SK-N-SH (cell line): ENCODE measurements at regions of chr3 and their contacts with region 1.

Region 1: DNA sequence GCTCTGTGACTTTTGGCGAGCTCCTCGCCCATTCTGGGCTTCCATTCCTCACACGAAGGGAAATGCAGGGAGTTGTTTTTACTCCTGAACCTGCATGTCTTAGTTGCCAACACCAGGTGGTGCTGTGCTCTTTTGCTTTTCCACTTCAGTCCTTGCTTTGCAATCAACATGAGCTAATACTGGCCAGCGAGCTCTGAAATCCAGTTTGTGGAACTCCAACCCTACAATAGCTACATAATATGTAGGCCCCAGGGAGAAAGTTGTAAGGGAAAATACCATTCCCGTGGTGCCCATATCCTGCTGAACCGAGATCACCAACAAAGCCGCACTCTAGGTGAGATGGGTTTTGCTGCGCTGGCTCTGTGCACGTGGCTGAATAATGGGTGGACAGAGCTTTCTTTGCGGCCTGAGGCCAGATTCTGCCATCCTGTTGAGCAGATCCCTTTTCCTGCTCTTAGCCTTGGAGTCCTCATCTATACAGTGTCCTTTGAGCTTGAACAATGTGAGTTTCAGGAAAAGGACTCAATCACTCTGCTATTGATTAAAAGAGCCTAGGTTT is 25.0 kb downstream of the LSM3 start:
- DNase-seq: peak; percentile 70
- H3K4me3 ChIP-seq: peak overlapping the region in 1 of 2 experiments; percentile 21; a peak in 1 of 4 replicates
- H3K27ac ChIP-seq: no peak overlapping the region; a peak in 1 of 4 replicates
- H3K4me1 ChIP-seq: peaks cover 3 to 17% of the 10 kb centered on the region in 2 experiments; a peak in 2 of 4 replicates
- H3K27me3 ChIP-seq: no peaks in the 10 kb centered on the region
- CTCF ChIP-seq: peak; percentile 82
- EP300 ChIP-seq: no peak
- RAD21 ChIP-seq: peak; percentile 95

Region 2: DNA sequence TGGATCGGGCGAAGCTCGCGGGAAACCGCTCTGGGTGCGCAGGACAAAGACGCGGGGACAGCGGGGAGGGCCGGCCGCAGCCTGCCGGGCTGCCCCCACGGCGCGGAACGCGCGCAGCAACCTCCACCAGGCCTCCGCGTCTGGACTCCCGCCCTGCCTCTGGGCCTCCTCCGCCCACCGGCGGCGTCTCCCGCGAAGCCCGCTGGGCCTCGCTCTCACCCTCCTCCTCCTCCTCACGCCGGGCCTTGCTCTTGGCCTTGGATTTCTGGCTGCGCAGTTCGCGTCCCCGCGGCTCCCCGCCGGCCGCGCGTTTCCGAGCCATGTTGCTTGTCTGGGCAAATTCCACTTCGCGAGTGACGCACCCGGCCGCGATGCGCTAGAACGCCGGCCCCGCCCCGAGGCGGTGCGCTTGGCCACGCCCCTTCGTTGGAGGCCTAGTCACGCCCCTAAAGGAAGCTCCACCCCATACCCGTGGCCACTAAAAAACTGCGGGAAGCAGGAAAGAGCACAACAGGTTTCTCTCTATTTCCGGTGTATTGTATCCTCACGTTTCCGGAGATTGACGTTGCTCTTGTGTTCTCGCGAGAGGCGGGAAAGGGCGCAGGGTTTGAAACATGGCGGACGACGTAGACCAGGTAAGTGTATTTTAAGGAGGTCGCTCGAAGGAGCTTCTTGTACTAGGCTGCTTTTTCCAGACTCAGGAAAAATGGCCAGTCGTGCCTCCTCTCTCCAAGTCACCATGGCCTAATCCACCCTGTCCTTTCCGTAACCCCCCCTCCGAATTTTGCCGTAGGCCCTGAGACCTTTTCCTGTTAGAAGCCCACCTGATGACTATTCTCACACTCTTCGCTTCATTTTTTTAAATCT is 25.1 kb before region 1 on chr3 and contains the starts of genes LSM3 and XPC:
- CTCF ChIA-PET with region 1: interaction called, 28 read pairs
- POLR2A ChIA-PET with region 1: interaction called, 9 read pairs
- DNase-seq: peak; percentile 95
- H3K4me3 ChIP-seq: peak within 1 kb of the TSS; percentile 90 to 98
- H3K27ac ChIP-seq: peak within 1 kb of the TSS; percentile 90 to 94
- H3K4me1 ChIP-seq: peaks cover 17 to 34% of the 10 kb centered on the region in 2 experiments; a peak in 3 of 4 replicates
- H3K27me3 ChIP-seq: no peaks in the 10 kb centered on the region
- CTCF ChIP-seq: no peak
- EP300 ChIP-seq: no peak; a peak in 2 of 4 replicates
- RAD21 ChIP-seq: no peak
- polyA plus RNA-seq, gene LSM3: 5.1 and 6.4 TPM in 2 replicates
- polyA plus RNA-seq, gene XPC: 50.0 and 52.0 TPM in 2 replicates

Region 3: GRCh38 chr3:14216257-14217048 is 12.9 kb after region 1 on chr3:
- CTCF ChIA-PET with region 1: interaction called, 115 read pairs
- POLR2A ChIA-PET with region 1: interaction called, 18 read pairs
- DNase-seq: peak; percentile 85
- H3K4me3 ChIP-seq: peak overlapping the region; percentile 50 to 55
- H3K27ac ChIP-seq: peak overlapping the region; percentile 52 to 96
- H3K4me1 ChIP-seq: peaks cover 0 to 4% of the 10 kb centered on the region in 2 experiments; a peak in 1 of 4 replicates
- H3K27me3 ChIP-seq: no peaks in the 10 kb centered on the region
- CTCF ChIP-seq: peak; percentile 60
- EP300 ChIP-seq: no peak; a peak in 1 of 4 replicates
- RAD21 ChIP-seq: peak; percentile 69

Region 4: DNA sequence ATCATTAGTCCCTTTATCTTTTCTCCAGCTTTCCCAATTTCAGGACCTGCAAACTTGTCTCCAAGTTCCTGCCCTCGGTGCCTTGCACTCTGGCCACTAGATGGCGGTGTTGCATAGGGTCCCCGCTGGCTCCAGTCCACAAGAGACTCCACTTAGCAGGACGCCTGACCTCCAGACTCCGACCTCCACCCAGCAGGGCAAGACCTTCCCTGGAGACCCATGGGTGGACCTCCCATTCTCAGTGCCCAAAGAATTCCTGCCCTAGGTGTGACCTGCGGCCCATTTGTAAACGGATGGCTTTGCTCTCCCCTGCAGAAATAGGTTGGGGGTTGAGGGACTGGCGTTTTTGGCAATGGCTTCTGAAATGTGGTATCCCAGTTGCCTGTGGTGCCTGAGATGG is 57.6 kb after region 1 on chr3:
- CTCF ChIA-PET with region 1: interaction called, 92 read pairs
- POLR2A ChIA-PET with region 1: no interaction called
- DNase-seq: peak; percentile 88
- H3K4me3 ChIP-seq: peak overlapping the region in 1 of 2 experiments; percentile 42; a peak in 1 of 4 replicates
- H3K27ac ChIP-seq: no peak overlapping the region
- H3K4me1 ChIP-seq: no peaks in the 10 kb centered on the region
- H3K27me3 ChIP-seq: 0 out of 2 replicates have a peak, but pooled peaks cover 6% of the 10 kb centered on the region
- CTCF ChIP-seq: peak; percentile 98
- EP300 ChIP-seq: no peak
- RAD21 ChIP-seq: peak; percentile 99

Region 5: GRCh38 chr3:14452679-14453367 is 249.2 kb after region 1 on chr3:
- CTCF ChIA-PET with region 1: interaction called, 16 read pairs
- POLR2A ChIA-PET with region 1: no interaction called
- DNase-seq: no peak
- H3K4me3 ChIP-seq: peak overlapping the region in 1 of 2 experiments; percentile 29; a peak in 2 of 4 replicates
- H3K27ac ChIP-seq: peak overlapping the region; percentile 72 to 97
- H3K4me1 ChIP-seq: peaks cover 9 to 24% of the 10 kb centered on the region in 2 experiments; a peak in 3 of 4 replicates
- H3K27me3 ChIP-seq: no peaks in the 10 kb centered on the region
- CTCF ChIP-seq: peak; percentile 23; the same call in 1 of the 2 replicates
- EP300 ChIP-seq: 0 out of 4 replicates have a peak, but pooled peaks of 1 of the 2 experiments have one; percentile 62
- RAD21 ChIP-seq: peak; percentile 14; the same call in 1 of the 2 replicates

Region 6: DNA sequence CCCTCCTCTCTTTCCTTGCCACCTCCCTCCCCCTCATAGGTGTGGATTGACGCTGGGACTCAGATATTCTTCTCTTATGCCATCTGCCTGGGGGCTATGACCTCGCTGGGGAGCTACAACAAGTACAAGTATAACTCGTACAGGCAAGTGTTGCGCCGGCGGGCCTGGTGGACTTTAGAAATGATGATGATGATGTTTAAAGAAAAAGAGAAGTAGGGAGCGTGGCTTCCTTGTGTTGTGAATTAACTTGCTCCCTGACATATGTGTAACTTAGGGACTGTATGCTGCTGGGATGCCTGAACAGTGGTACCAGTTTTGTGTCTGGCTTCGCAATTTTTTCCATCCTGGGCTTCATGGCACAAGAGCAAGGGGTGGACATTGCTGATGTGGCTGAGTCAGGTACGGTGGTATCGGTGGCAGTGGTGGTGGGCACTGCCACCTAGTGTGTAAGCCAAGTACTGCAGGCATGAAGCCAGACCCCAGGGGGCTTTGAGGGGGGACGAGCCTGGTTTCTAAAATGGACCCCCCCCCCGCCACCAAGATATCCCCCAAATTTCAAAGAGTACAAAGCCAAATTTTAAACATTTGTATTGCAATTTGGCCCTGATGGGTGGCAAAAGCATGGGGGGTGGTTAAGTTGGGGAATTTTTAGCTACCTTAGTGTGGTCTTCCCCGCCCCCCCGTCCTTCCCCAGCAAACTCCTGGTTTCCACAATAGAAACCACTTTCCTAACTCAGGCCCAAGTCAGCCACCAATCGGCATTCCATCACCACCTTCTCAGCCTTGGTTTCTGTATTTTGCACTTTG is 264.4 kb after region 1 on chr3:
- CTCF ChIA-PET with region 1: interaction called, 75 read pairs
- POLR2A ChIA-PET with region 1: interaction called, 4 read pairs
- DNase-seq: peak; percentile 92
- H3K4me3 ChIP-seq: peak overlapping the region in 1 of 2 experiments; percentile 23; a peak in 1 of 4 replicates
- H3K27ac ChIP-seq: no peak overlapping the region
- H3K4me1 ChIP-seq: peaks cover 4 to 19% of the 10 kb centered on the region in 2 experiments; a peak in 3 of 4 replicates
- H3K27me3 ChIP-seq: no peaks in the 10 kb centered on the region
- CTCF ChIP-seq: peak; percentile 95
- EP300 ChIP-seq: no peak
- RAD21 ChIP-seq: peak; percentile 93

Region 7: DNA sequence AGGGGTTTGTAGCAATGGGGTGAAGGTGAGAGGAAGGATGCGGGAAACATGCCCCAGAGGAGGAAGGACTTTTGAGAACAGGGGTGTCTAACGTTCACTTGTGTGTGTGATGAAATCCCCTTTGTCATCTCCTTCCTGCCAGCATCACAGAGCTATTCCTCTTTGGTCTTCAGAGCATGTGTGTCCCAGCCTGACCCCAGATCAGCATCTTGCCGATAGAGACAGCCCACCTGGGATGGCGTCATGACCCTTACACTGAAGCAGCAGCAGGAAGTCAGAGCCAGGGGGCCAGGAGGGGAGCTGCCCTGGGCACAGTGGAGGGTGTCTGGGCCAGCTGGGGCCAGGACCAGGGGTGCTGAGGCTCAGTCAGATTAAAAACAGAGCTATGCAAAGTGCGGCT is 366.5 kb after region 1 on chr3:
- CTCF ChIA-PET with region 1: no interaction called
- POLR2A ChIA-PET with region 1: no interaction called
- DNase-seq: peak; percentile 87
- H3K4me3 ChIP-seq: no peak overlapping the region
- H3K27ac ChIP-seq: peak overlapping the region in 1 of 2 experiments; percentile 43; a peak in 2 of 4 replicates
- H3K4me1 ChIP-seq: peaks cover 0 to 29% of the 10 kb centered on the region in 2 experiments; a peak in 2 of 4 replicates
- H3K27me3 ChIP-seq: no peaks in the 10 kb centered on the region
- CTCF ChIP-seq: no peak
- EP300 ChIP-seq: peak in 1 of 2 experiments; percentile 36; a peak in 1 of 4 replicates
- RAD21 ChIP-seq: no peak